Naive thymus-derived CD8-positive, alpha-beta T cell (primary cell): ENCODE measurements at regions of chr20 and their contacts with region 1.

Region 1: GRCh38 chr20:64079273-64080012 is at the start of gene RGS19:
- DNase-seq: peak in 9 of 10 donors; percentile 40 to 82 (median 65)
- ATAC-seq: peak; percentile 16 to 33
- H3K4me3 Mint-ChIP-seq: peak within 1 kb of the TSS; percentile 82 to 95 (median 92)
- H3K27ac Mint-ChIP-seq: peak within 1 kb of the TSS; percentile 53 to 96 (median 90)
- H3K4me1 Mint-ChIP-seq: peaks cover 22 to 66% (median 52%) of the 10 kb centered on the region in 4 donors
- H3K27me3 Mint-ChIP-seq: peaks cover 0 to 3% (median 1%) of the 10 kb centered on the region in 5 donors
- polyA plus RNA-seq, gene RGS19: 50.9 to 67.5 (median 59.4) TPM

Region 2: GRCh38 chr20:63955827-63956663 is 123.4 kb before region 1 on chr20 and contains the start of gene UCKL1:
- POLR2A ChIA-PET with region 1: interaction called, 16 read pairs
- DNase-seq: peak; percentile 83 to 95 (median 89)
- ATAC-seq: peak; percentile 81 to 85
- H3K4me3 Mint-ChIP-seq: peak within 1 kb of the TSS; percentile 76 to 89 (median 84)
- H3K27ac Mint-ChIP-seq: peak within 1 kb of the TSS; percentile 22 to 93 (median 82)
- H3K4me1 Mint-ChIP-seq: peaks cover 10 to 44% (median 30%) of the 10 kb centered on the region in 4 donors
- H3K27me3 Mint-ChIP-seq: no peaks in the 10 kb centered on the region
- polyA plus RNA-seq, gene UCKL1: 19.8 to 28.3 (median 21.0) TPM

Region 3: DNA sequence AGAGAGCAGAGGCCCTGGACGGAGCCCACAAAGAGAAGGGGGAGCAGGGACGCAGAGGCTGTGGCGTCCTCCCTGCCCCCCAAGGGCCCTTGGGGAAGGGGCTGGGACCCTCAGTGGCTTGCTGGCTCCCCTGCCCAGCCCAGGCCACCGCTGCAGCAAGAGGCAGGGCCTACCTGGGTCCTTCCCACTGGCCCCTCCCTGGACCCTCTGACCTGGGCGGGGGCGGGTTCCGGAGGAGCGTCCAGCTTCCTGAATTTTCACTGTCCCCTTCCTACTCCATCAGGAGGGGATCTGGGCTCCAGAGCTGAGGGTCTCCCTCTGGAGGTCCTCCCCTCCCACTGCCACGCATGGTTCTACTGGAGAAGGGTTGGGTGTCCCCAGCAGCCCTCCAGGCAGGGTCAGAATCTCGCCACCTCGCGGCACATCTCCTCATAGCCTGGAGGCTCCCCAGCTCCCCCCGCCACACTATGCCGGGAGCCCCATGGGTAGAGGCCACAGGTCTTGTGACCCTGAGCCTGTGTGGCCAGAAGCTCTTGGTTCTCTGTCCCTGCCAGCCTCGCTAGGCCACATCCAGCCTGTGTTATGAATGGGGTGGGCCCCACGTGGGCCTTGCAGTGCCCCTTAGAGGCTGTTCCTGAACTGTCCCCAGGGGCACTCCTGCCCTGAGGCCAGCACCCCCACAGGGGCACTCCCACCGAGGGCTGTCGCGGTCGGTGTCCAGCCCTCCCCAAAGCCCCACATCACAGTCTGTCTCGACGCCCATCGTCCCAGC is 29.0 kb before region 1 on chr20:
- POLR2A ChIA-PET with region 1: no interaction called
- DNase-seq: no peak
- ATAC-seq: no peak
- H3K4me3 Mint-ChIP-seq: peak overlapping the region in 7 of 10 donors; percentile 22 to 63 (median 38)
- H3K27ac Mint-ChIP-seq: no peak overlapping the region
- H3K4me1 Mint-ChIP-seq: peaks cover 15 to 26% (median 19%) of the 10 kb centered on the region in 4 donors
- H3K27me3 Mint-ChIP-seq: peaks cover 0 to 64% (median 21%) of the 10 kb centered on the region in 5 donors

Region 4: DNA sequence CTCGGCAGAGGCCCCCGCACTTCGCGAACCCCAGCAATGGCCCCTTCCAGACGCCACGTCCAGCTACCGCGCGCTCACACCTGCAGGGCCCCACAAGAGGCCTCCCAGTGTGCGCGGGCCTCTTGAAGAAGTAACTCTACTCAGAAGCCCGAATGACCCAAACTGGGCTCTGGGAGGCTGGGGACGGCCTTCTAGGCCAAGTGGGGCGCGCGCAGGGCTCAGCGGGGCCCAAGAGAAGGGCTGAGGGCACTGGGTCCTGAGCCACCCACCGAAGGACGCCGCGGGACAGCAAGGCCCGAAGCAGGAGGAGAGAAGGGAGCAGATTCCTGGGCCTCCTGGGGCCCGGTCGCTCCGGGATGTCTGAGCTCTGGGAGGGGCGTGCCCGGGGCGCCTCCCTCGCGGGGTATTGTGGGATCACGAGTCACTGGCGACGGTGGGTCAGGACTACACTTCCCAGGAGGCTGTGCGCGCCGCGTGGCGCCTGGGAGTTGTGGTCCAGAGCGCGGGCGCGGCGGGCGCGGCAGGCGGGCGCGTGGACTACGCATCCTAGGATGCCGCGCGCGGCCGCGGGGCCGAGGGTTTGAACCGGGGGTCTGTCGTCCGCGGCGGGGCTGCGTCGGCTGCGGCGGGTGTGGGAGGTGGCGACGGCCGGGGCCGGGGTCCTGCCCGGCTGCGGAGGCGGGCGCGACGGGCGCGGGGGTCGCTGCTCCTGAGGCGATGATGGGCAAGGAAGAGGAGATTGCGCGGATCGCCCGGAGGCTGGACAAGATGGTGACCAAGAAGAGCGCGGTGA is 16.7 kb before region 1 on chr20 and contains the start of gene TCEA2:
- POLR2A ChIA-PET with region 1: interaction called, 47 read pairs
- DNase-seq: peak; percentile 82 to 94 (median 90)
- ATAC-seq: peak; percentile 94 to 97
- H3K4me3 Mint-ChIP-seq: peak within 1 kb of the TSS; percentile 81 to 92 (median 86)
- H3K27ac Mint-ChIP-seq: peak within 1 kb of the TSS; percentile 40 to 92 (median 76)
- H3K4me1 Mint-ChIP-seq: peaks cover 25 to 56% (median 51%) of the 10 kb centered on the region in 4 donors
- H3K27me3 Mint-ChIP-seq: no peaks in the 10 kb centered on the region
- polyA plus RNA-seq, gene TCEA2: 22.5 to 33.0 (median 32.1) TPM

Region 5: GRCh38 chr20:64091770-64092169 is 12.3 kb after region 1 on chr20:
- POLR2A ChIA-PET with region 1: no interaction called
- DNase-seq: no peak
- ATAC-seq: no peak
- H3K4me3 Mint-ChIP-seq: peak overlapping the region in 1 of 10 donors; percentile 34
- H3K27ac Mint-ChIP-seq: no peak overlapping the region
- H3K4me1 Mint-ChIP-seq: peaks cover 0 to 6% (median 3%) of the 10 kb centered on the region in 4 donors
- H3K27me3 Mint-ChIP-seq: no peaks in the 10 kb centered on the region

Region 6: DNA sequence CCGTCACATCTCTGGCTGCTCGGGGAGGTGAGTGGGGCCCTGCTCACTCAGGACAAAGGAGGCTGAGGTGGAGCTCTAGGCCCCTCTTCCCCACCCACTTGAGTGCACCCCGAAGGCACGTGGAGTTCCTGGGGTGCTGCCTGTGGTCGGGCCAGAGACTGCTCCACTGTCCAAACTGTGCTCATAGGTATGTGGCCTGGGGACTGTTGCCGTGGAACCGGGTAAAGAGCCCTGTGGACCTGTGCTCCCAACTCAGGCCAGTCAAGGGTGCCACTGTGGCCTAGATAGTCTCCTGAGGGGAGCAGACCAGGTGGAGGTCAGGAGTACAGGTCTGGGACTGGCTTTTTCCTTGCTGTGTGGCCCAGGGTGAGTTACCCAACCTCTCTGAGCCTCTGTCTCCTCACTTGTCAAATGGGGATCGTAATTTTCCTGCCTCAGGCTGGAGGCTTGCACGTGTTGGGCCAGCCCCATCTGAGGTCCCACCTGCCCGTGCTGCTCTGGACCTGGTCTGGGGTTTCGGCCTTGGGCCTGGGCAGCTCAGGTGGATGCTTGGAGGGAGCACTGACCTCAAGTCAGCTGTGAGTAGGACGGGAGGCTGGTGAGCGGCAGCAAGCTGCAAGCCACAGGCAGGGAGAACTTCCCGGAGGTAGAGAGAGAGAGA is 40.4 kb after region 1 on chr20:
- POLR2A ChIA-PET with region 1: interaction called, 13 read pairs
- DNase-seq: peak in 2 of 10 donors; percentile 14 to 65
- ATAC-seq: peak; percentile 7 to 14
- H3K4me3 Mint-ChIP-seq: peak overlapping the region; percentile 14 to 81 (median 70)
- H3K27ac Mint-ChIP-seq: peak overlapping the region in 8 of 10 donors; percentile 44 to 95 (median 70)
- H3K4me1 Mint-ChIP-seq: peaks cover 7 to 9% (median 9%) of the 10 kb centered on the region in 4 donors
- H3K27me3 Mint-ChIP-seq: peaks cover 0 to 10% (median 2%) of the 10 kb centered on the region in 5 donors

Region 7: GRCh38 chr20:64131406-64131805 is 52.0 kb after region 1 on chr20:
- POLR2A ChIA-PET with region 1: no interaction called
- DNase-seq: peak in 1 of 10 donors; percentile 21
- ATAC-seq: no peak
- H3K4me3 Mint-ChIP-seq: no peak overlapping the region
- H3K27ac Mint-ChIP-seq: no peak overlapping the region
- H3K4me1 Mint-ChIP-seq: peaks cover 0 to 4% (median 0%) of the 10 kb centered on the region in 4 donors
- H3K27me3 Mint-ChIP-seq: peaks cover 12 to 44% (median 15%) of the 10 kb centered on the region in 5 donors